CD8-positive, alpha-beta memory T cell (primary cell): ENCODE measurements at regions of chr16 and their contacts with region 1.

Region 1: DNA sequence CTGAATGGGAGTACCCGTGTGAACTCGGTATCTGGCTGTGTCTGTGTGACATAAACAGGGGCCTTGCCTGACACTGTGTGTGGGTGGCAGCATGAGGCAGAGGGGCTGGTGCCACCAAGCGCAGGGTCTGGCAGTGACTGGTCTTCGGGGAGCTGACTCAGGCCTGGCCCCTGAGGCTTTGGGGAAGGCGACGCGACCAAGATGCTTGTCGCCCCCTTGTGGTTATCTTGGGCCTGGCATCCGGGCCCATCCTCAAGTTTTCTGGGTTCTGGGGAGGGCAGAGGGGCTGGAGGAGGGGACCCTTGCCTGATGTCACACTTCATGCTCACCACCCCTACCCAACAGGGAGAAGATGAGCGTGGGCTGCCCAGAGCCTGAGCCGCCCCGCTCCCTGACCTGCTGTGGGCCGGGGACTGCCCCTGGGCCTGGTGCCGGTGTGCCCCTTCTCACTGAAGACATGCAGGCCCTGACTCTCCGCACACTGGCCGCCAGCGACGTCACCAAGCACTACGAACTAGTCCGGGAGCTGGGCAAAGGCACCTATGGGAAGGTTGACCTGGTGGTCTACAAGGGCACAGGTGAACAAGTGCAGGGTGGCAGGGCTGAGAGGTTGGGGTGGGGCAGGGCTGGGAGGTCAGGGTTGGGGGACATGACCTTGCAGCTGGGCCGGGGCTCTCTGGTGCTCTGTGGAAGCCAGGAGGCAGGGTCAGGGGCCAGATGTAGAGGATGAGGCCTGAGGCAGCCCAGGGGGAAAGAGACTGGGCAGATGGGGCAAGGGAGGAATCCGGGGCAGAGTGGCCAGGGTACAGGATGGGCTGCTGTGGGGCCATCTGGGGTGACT is 24.9 kb downstream of the SBK1 start:
- DNase-seq: peak; percentile 61 to 80 (median 68)
- H3K4me3 ChIP-seq: no peak overlapping the region
- H3K4me3 Mint-ChIP-seq: peak overlapping the region in 4 of 7 donors; percentile 33 to 67 (median 60)
- H3K27ac ChIP-seq: no peak overlapping the region
- H3K27ac Mint-ChIP-seq: peak overlapping the region; percentile 61 to 93 (median 84)
- H3K4me1 ChIP-seq: peaks cover 44% of the 10 kb centered on the region
- H3K4me1 Mint-ChIP-seq: peaks cover 23 to 52% (median 26%) of the 10 kb centered on the region in 3 donors
- H3K27me3 ChIP-seq: no peaks in the 10 kb centered on the region
- H3K27me3 Mint-ChIP-seq: no peaks in the 10 kb centered on the region

Region 2: DNA sequence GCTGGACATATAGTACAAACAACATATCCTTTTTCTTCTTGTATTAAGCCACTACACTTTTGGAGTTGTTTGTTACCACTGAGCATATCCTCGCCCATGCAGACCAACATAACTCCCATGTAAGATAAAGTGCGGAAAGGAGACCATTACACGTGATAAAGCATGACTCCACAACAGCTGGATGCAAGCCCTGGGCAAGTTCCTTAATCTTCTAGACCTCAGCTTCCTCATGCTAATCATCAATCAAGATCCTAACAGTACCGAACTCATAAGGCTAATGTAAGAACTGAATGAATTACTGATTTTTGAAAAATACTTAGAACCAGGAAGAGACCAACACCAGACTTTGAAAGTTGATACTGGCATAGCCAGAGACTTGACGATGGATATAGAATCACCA is 206.8 kb before region 1 on chr16:
- CTCF ChIA-PET with region 1: no interaction called
- POLR2A ChIA-PET with region 1: no interaction called
- DNase-seq: no peak
- H3K4me3 ChIP-seq: no peak overlapping the region
- H3K4me3 Mint-ChIP-seq: peak overlapping the region in 1 of 7 donors; percentile 13
- H3K27ac ChIP-seq: no peak overlapping the region
- H3K27ac Mint-ChIP-seq: peak overlapping the region in 5 of 8 donors; percentile 12 to 79 (median 31)
- H3K4me1 ChIP-seq: no peaks in the 10 kb centered on the region
- H3K4me1 Mint-ChIP-seq: peaks cover 9 to 19% (median 12%) of the 10 kb centered on the region in 3 donors
- H3K27me3 ChIP-seq: no peaks in the 10 kb centered on the region
- H3K27me3 Mint-ChIP-seq: no peaks in the 10 kb centered on the region

Region 3: GRCh38 chr16:28126684-28127620 is 190.3 kb before region 1 on chr16:
- CTCF ChIA-PET with region 1: no interaction called
- POLR2A ChIA-PET with region 1: no interaction called
- DNase-seq: no peak
- H3K4me3 ChIP-seq: no peak overlapping the region
- H3K4me3 Mint-ChIP-seq: no peak overlapping the region
- H3K27ac ChIP-seq: no peak overlapping the region
- H3K27ac Mint-ChIP-seq: peak overlapping the region; percentile 34 to 96 (median 68)
- H3K4me1 ChIP-seq: no peaks in the 10 kb centered on the region
- H3K4me1 Mint-ChIP-seq: peaks cover 11 to 28% (median 25%) of the 10 kb centered on the region in 3 donors
- H3K27me3 ChIP-seq: no peaks in the 10 kb centered on the region
- H3K27me3 Mint-ChIP-seq: peaks cover 0 to 2% of the 10 kb centered on the region in 2 donors

Region 4: DNA sequence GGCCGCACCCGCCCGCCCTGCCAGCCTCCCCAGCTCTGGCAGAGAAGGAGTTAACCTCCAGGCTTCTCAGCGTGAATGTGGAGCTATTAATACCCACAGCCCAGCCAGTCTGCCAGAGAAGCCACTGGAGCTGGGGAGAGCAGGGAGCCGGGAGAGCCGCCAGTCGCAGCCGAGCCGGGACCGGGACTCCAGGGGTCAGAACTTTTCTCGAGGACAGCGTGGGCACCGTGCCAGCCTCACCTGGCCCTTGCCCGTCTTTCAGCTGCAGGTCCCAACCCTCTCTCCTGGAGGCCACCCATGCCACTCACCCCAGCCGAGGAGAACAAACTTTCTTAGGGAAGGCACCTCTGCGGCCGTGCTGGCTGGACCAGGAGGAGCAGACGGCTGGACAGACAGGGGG is 58.7 kb before region 1 on chr16:
- CTCF ChIA-PET with region 1: no interaction called
- POLR2A ChIA-PET with region 1: no interaction called
- DNase-seq: no peak
- H3K4me3 ChIP-seq: no peak overlapping the region
- H3K4me3 Mint-ChIP-seq: no peak overlapping the region
- H3K27ac ChIP-seq: no peak overlapping the region
- H3K27ac Mint-ChIP-seq: no peak overlapping the region
- H3K4me1 ChIP-seq: peaks cover 12% of the 10 kb centered on the region
- H3K4me1 Mint-ChIP-seq: peaks cover 14 to 16% (median 15%) of the 10 kb centered on the region in 3 donors
- H3K27me3 ChIP-seq: no peaks in the 10 kb centered on the region
- H3K27me3 Mint-ChIP-seq: peaks cover 3 to 16% of the 10 kb centered on the region in 2 donors

Region 5: GRCh38 chr16:28283798-28284577 is 33.3 kb before region 1 on chr16:
- CTCF ChIA-PET with region 1: interaction called, 210 read pairs
- POLR2A ChIA-PET with region 1: no interaction called
- DNase-seq: no peak
- H3K4me3 ChIP-seq: no peak overlapping the region
- H3K4me3 Mint-ChIP-seq: peak overlapping the region in 1 of 7 donors; percentile 27
- H3K27ac ChIP-seq: no peak overlapping the region
- H3K27ac Mint-ChIP-seq: peak overlapping the region in 2 of 8 donors; percentile 37 to 72
- H3K4me1 ChIP-seq: peaks cover 18% of the 10 kb centered on the region
- H3K4me1 Mint-ChIP-seq: peaks cover 17 to 22% (median 17%) of the 10 kb centered on the region in 3 donors
- H3K27me3 ChIP-seq: no peaks in the 10 kb centered on the region
- H3K27me3 Mint-ChIP-seq: no peaks in the 10 kb centered on the region

Region 6: DNA sequence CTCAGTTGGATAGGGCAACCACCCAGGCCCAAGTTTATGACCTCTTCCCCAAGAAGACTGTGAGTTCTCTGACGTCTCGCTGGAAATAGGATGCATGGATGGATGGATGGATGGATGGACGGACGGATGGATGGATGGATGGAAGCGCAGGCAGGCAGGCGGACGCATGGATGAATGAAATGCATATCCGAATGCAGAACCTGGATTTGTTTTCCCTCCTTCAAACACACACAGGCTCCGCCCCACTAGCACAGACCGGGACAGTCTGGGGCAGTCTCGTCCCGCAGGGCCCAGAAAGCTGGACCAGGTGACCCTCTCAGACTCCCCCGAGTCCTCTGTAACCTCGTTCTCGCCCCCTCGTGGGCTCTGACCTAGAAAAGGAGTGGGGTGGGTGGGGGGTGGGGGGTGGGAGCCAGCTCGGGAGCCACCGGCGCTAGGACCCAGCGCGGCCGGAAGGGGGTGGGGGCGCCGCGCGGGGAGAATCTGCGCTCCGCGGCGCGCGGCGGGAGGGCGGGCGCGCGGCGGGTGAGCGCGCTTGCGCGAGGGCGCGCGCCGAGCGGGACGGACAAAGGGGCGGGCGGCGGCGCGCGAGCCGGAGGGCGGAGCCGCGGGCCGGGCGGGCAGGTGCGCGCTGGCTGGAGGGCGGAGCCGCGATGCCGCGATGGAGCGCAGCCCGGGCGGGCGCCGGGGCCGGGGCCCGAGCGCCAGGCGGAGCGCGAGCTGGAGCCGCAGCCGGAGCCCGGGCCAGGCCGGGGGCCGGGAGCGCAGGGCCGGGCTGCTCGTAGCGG is 25.2 kb before region 1 on chr16 and contains the start of gene SBK1:
- CTCF ChIA-PET with region 1: interaction called, 39 read pairs
- POLR2A ChIA-PET with region 1: interaction called, 4 read pairs
- DNase-seq: peak; percentile 78 to 89 (median 87)
- H3K4me3 ChIP-seq: peak within 1 kb of the TSS; percentile 90
- H3K4me3 Mint-ChIP-seq: peak within 1 kb of the TSS; percentile 91 to 98 (median 96)
- H3K27ac ChIP-seq: peak within 1 kb of the TSS; percentile 64
- H3K27ac Mint-ChIP-seq: peak within 1 kb of the TSS; percentile 82 to 97 (median 94)
- H3K4me1 ChIP-seq: peaks cover 68% of the 10 kb centered on the region
- H3K4me1 Mint-ChIP-seq: peaks cover 61 to 72% (median 71%) of the 10 kb centered on the region in 3 donors
- H3K27me3 ChIP-seq: no peaks in the 10 kb centered on the region
- H3K27me3 Mint-ChIP-seq: no peaks in the 10 kb centered on the region
- total RNA-seq, gene SBK1: 3.9 to 4.1 TPM

Region 7: GRCh38 chr16:28297784-28298510 is 19.3 kb before region 1 on chr16:
- CTCF ChIA-PET with region 1: interaction called, 39 read pairs
- POLR2A ChIA-PET with region 1: interaction called, 4 read pairs
- DNase-seq: no peak
- H3K4me3 ChIP-seq: peak overlapping the region; percentile 8
- H3K4me3 Mint-ChIP-seq: peak overlapping the region; percentile 62 to 90 (median 79)
- H3K27ac ChIP-seq: no peak overlapping the region
- H3K27ac Mint-ChIP-seq: peak overlapping the region; percentile 85 to 99 (median 90)
- H3K4me1 ChIP-seq: peaks cover 81% of the 10 kb centered on the region
- H3K4me1 Mint-ChIP-seq: peaks cover 73 to 88% (median 85%) of the 10 kb centered on the region in 3 donors
- H3K27me3 ChIP-seq: no peaks in the 10 kb centered on the region
- H3K27me3 Mint-ChIP-seq: no peaks in the 10 kb centered on the region